Breast epithelium (tissue), 4 donors: ENCODE measurements at regions of chr12 and their contacts with region 1.

Region 1: DNA sequence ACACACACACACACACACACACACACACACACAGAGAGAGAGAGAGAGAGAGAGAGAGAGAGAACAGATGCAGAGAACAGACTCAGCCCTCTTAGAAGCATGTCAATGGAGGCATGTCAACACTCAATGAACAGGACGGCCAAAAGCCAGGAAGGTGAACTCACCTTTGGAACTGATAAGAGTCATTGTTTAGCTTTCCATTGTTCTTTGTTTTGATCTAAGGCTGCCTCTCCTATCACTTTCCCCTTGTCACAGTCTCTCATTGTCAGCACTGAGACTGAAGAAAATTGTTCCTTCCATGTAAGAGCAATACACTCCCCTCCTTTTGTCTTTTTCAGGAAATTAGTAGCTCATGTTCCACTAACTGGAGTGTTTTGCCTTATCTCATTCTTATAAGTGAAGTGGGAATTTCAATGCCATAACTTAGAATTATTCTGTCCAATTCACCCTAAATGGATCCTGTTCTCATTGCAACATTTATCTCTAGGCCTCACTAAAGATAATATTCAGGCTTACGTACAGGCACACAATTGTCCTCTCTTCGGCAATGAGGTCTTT is 218.0 kb downstream of the DUSP6 start:
- DNase-seq: no peak
- H3K4me3 ChIP-seq: no peak overlapping the region
- H3K27ac ChIP-seq: no peak overlapping the region
- H3K4me1 ChIP-seq: no peaks in the 10 kb centered on the region
- H3K27me3 ChIP-seq: no peaks in the 10 kb centered on the region
- CTCF ChIP-seq: no peak
- POLR2A ChIP-seq: no peak

Region 2: DNA sequence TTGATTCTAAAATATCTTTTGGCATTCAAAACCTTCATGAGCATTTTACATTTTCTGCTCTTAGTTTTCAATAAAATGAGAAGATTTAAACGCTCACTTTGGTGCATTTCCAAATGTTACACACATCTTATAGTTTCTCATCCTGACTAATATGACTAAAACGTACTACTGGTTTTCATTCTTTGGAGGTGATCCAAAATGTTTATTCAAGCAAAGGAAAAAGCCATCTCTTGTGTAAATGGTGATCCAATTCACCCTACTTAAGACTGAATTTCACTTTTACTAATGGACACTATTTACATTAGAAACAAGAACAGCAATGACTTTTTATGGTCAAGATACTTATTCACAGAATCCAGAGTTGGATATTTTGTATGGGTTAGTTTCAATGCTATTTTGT is 640.7 kb before region 1 on chr12:
- intact Hi-C with region 1: loop called (anchors 5 kb)
- DNase-seq: no peak
- H3K4me3 ChIP-seq: no peak overlapping the region
- H3K27ac ChIP-seq: no peak overlapping the region
- H3K4me1 ChIP-seq: no peaks in the 10 kb centered on the region
- H3K27me3 ChIP-seq: no peaks in the 10 kb centered on the region
- CTCF ChIP-seq: no peak
- POLR2A ChIP-seq: no peak

Region 3: GRCh38 chr12:88884600-88884999 is 249.7 kb before region 1 on chr12:
- intact Hi-C with region 1: no loop called
- DNase-seq: no peak
- H3K4me3 ChIP-seq: no peak overlapping the region
- H3K27ac ChIP-seq: no peak overlapping the region
- H3K4me1 ChIP-seq: no peaks in the 10 kb centered on the region
- H3K27me3 ChIP-seq: no peaks in the 10 kb centered on the region
- CTCF ChIP-seq: no peak
- POLR2A ChIP-seq: no peak